SK-N-SH (cell line): ENCODE measurements at regions of chr10 and their contacts with region 1.

Region 1: DNA sequence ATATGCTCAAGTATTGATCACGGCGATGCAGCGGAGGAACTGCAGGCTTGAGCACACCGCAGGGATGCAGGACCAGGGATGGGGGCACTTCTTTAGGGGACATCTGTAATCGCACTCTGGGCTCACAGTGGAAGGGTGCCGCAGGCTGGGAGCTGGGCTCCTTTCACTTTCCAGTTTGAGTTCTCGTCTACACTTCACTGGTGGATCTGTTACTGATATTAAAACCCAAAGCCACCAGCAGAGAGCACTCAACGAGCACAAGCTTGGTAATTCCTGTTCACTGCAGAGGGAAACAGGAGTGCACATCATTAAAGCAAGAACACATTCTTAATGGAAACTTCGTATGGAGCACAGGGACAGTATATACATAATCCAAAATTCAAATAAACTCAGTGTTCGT is 91.3 kb downstream of the PARD3 start:
- DNase-seq: peak; percentile 47
- H3K4me3 ChIP-seq: no peak overlapping the region
- H3K27ac ChIP-seq: no peak overlapping the region
- H3K4me1 ChIP-seq: peaks cover 7 to 20% of the 10 kb centered on the region in 2 experiments; a peak in 3 of 4 replicates
- H3K27me3 ChIP-seq: no peaks in the 10 kb centered on the region
- CTCF ChIP-seq: peak; percentile 65
- EP300 ChIP-seq: no peak
- RAD21 ChIP-seq: peak; percentile 90

Region 2: GRCh38 chr10:34710391-34710751 is 13.4 kb before region 1 on chr10:
- CTCF ChIA-PET with region 1: interaction called, 23 read pairs
- POLR2A ChIA-PET with region 1: no interaction called
- DNase-seq: no peak
- H3K4me3 ChIP-seq: no peak overlapping the region
- H3K27ac ChIP-seq: peak overlapping the region in 1 of 2 experiments; percentile 64; a peak in 2 of 4 replicates
- H3K4me1 ChIP-seq: peaks cover 5 to 8% of the 10 kb centered on the region in 2 experiments; a peak in 3 of 4 replicates
- H3K27me3 ChIP-seq: no peaks in the 10 kb centered on the region
- CTCF ChIP-seq: no peak
- EP300 ChIP-seq: no peak
- RAD21 ChIP-seq: no peak

Region 3: DNA sequence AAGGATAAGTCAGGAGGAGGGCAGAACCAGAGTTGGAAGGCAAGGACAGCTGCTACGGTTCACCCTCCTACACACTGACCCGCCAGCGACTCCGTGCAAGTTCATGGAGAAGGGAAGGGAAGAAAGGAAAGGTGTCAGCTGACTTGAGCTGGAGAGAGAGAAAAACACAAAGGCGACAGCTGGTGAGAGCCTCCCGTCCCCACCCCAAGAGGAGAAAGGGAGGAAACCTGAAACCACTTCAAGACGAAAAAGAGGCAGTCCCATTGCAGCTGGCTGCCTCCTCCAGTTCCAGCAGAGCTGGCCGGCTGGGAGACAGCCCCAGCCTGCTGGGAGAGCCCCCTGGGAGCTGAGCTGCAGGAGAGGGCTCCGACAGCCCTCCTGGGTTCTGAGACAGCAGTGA is 16.2 kb after region 1 on chr10:
- CTCF ChIA-PET with region 1: interaction called, 14 read pairs
- POLR2A ChIA-PET with region 1: no interaction called
- DNase-seq: no peak
- H3K4me3 ChIP-seq: no peak overlapping the region
- H3K27ac ChIP-seq: peak overlapping the region; percentile 21 to 43; a peak in 1 of 4 replicates
- H3K4me1 ChIP-seq: peaks cover 10 to 38% of the 10 kb centered on the region in 2 experiments; a peak in 2 of 4 replicates
- H3K27me3 ChIP-seq: no peaks in the 10 kb centered on the region
- CTCF ChIP-seq: no peak
- EP300 ChIP-seq: no peak
- RAD21 ChIP-seq: no peak

Region 4: GRCh38 chr10:34815185-34816084 is 91.7 kb after region 1 on chr10 and contains the start of gene PARD3:
- CTCF ChIA-PET with region 1: interaction called, 14 read pairs
- POLR2A ChIA-PET with region 1: interaction called, 5 read pairs
- DNase-seq: peak; percentile 95
- H3K4me3 ChIP-seq: peak within 1 kb of the TSS; percentile 85 to 90
- H3K27ac ChIP-seq: peak within 1 kb of the TSS; percentile 64 to 89
- H3K4me1 ChIP-seq: peaks cover 6 to 28% of the 10 kb centered on the region in 2 experiments; a peak in 2 of 4 replicates
- H3K27me3 ChIP-seq: no peaks in the 10 kb centered on the region
- CTCF ChIP-seq: no peak
- EP300 ChIP-seq: no peak
- RAD21 ChIP-seq: no peak
- polyA plus RNA-seq, gene PARD3: 29.4 and 38.9 TPM in 2 replicates

Region 5: GRCh38 chr10:34938399-34938670 is 214.6 kb after region 1 on chr10:
- CTCF ChIA-PET with region 1: interaction called, 11 read pairs
- POLR2A ChIA-PET with region 1: no interaction called
- DNase-seq: no peak
- H3K4me3 ChIP-seq: no peak overlapping the region
- H3K27ac ChIP-seq: no peak overlapping the region
- H3K4me1 ChIP-seq: no peaks in the 10 kb centered on the region
- H3K27me3 ChIP-seq: no peaks in the 10 kb centered on the region
- CTCF ChIP-seq: no peak
- EP300 ChIP-seq: no peak
- RAD21 ChIP-seq: no peak

Region 6: DNA sequence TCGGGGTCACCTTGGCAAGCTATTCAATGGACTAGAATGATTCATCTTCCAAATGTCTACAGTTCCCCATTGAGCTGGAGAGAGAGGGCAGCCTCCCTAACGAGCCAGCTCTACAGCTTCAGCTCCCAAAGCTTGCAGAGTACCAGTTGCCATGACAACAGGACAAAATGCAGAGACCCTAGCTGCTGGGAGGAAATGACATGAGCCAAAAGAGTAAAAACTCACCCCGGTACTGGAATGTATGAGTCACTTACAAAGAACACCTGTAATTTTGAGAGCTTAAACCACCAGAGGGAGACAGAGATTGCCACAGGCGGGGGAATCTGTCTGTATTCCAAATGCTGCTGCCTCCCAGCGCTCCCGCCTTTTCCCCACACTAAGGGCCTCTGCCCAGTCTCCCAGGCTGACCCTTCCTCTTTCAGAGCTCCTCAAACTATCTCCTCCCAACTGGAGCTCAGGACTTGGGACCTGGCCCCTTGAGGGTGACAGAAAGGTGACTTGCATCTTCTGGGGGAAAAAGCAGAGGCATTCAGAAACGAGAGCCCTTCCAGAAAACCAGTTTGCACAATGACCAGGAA is 270.9 kb after region 1 on chr10:
- CTCF ChIA-PET with region 1: interaction called, 13 read pairs
- POLR2A ChIA-PET with region 1: no interaction called
- DNase-seq: peak; percentile 72
- H3K4me3 ChIP-seq: no peak overlapping the region
- H3K27ac ChIP-seq: no peak overlapping the region
- H3K4me1 ChIP-seq: no peaks in the 10 kb centered on the region; a peak in 1 of 4 replicates
- H3K27me3 ChIP-seq: no peaks in the 10 kb centered on the region
- CTCF ChIP-seq: peak; percentile 73
- EP300 ChIP-seq: no peak
- RAD21 ChIP-seq: peak; percentile 79

Region 7: GRCh38 chr10:35027567-35027966 is 303.8 kb after region 1 on chr10:
- CTCF ChIA-PET with region 1: interaction called, 11 read pairs
- POLR2A ChIA-PET with region 1: no interaction called
- DNase-seq: peak; percentile 32
- H3K4me3 ChIP-seq: no peak overlapping the region
- H3K27ac ChIP-seq: peak overlapping the region in 1 of 2 experiments; percentile 31; a peak in 1 of 4 replicates
- H3K4me1 ChIP-seq: no peaks in the 10 kb centered on the region; a peak in 1 of 4 replicates
- H3K27me3 ChIP-seq: no peaks in the 10 kb centered on the region
- CTCF ChIP-seq: peak; percentile 73
- EP300 ChIP-seq: no peak
- RAD21 ChIP-seq: peak; percentile 49